Naive thymus-derived CD4-positive, alpha-beta T cell (primary cell): ENCODE measurements at regions of chr7 and their contacts with region 1.

Region 1: GRCh38 chr7:3013975-3014792 is 29.5 kb downstream of the CARD11 start:
- DNase-seq: no peak
- ATAC-seq: no peak
- H3K4me3 ChIP-seq: no peak overlapping the region
- H3K4me3 Mint-ChIP-seq: no peak overlapping the region
- H3K27ac ChIP-seq: no peak overlapping the region
- H3K27ac Mint-ChIP-seq: peak overlapping the region in 6 of 9 donors; percentile 31 to 84 (median 61)
- H3K4me1 ChIP-seq: peaks cover 19 to 23% of the 10 kb centered on the region in 2 donors
- H3K4me1 Mint-ChIP-seq: peaks cover 36 to 65% (median 57%) of the 10 kb centered on the region in 7 donors
- H3K27me3 ChIP-seq: no peaks in the 10 kb centered on the region
- H3K27me3 Mint-ChIP-seq: no peaks in the 10 kb centered on the region

Region 2: GRCh38 chr7:3028071-3028757 is 14.0 kb after region 1 on chr7:
- CTCF ChIA-PET with region 1: no interaction called
- POLR2A ChIA-PET with region 1: no interaction called
- intact Hi-C with region 1: loop called in 1 of 2 experiments (anchors 2 kb)
- DNase-seq: peak in 4 of 9 donors; percentile 14 to 62 (median 31)
- ATAC-seq: peak; percentile 26
- H3K4me3 ChIP-seq: no peak overlapping the region
- H3K4me3 Mint-ChIP-seq: peak overlapping the region; percentile 37 to 77 (median 70)
- H3K27ac ChIP-seq: peak overlapping the region; percentile 42
- H3K27ac Mint-ChIP-seq: peak overlapping the region; percentile 72 to 97 (median 83)
- H3K4me1 ChIP-seq: peaks cover 0 to 9% of the 10 kb centered on the region in 2 donors
- H3K4me1 Mint-ChIP-seq: peaks cover 40 to 80% (median 66%) of the 10 kb centered on the region in 7 donors
- H3K27me3 ChIP-seq: no peaks in the 10 kb centered on the region
- H3K27me3 Mint-ChIP-seq: no peaks in the 10 kb centered on the region